MCF 10A (cell line): ENCODE measurements at regions of chr6 and their contacts with region 1.

Region 1: DNA sequence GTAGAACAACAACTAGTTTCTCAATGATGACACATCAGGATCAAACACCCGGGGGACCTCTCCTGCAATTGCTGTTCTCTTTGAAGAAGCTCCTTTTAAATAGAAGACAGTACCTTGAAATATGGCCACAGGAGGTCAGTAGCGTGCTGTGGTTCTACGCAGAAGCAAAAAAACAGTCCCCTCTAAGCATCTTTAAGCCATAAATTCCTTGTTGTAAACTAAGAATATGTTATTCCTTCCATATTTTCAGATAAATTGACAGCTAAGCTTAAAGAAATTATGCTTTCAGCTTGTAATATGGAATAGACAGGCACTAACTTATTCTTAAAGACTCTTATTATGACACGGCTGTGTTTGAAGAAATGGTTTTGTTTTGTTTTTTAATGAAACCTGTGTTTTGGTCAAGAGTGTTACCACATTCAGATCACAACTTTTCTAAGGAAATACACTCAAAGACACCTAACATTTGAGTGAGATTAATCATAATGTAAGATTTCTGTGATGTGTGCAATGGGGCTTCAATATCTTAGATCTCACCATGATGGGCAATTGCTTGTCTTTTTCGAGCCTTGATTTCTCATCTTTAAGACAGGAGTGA is 49.7 kb upstream of the IL20RA start:
- DNase-seq: peak; percentile 81
- H3K4me3 Mint-ChIP-seq: no peak overlapping the region
- H3K27ac Mint-ChIP-seq: no peak overlapping the region
- H3K4me1 Mint-ChIP-seq: peaks cover 9% of the 10 kb centered on the region
- H3K27me3 Mint-ChIP-seq: no peaks in the 10 kb centered on the region
- CTCF ChIP-seq: peak; percentile 65

Region 2: GRCh38 chr6:137051790-137052472 is 42.6 kb before region 1 on chr6:
- CTCF ChIA-PET with region 1: no interaction called
- POLR2A ChIA-PET with region 1: no interaction called
- intact Hi-C with region 1: no loop called
- DNase-seq: no peak
- H3K4me3 Mint-ChIP-seq: no peak overlapping the region
- H3K27ac Mint-ChIP-seq: no peak overlapping the region
- H3K4me1 Mint-ChIP-seq: no peaks in the 10 kb centered on the region
- H3K27me3 Mint-ChIP-seq: no peaks in the 10 kb centered on the region
- CTCF ChIP-seq: no peak

Region 3: DNA sequence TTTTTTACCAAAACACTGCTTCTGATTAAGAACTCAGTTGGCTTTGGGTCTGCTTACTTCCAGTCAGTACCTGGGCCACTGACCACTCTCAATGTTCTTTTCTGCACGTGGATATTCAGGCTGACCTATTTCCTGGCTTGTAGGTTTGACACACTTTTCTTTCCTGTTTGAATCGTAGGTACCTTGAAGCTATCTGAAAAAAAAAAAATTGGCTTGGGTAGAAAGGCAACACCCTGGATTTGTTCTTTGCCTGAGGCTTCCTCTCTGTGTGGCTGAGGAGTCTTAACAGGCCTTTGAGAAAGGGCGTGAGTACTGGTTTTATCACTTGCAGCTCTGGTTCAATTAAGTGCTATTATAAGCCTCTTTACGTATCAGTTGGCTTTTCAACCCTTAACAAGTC is 10.9 kb after region 1 on chr6:
- CTCF ChIA-PET with region 1: interaction called, 12 read pairs
- POLR2A ChIA-PET with region 1: interaction called, 27 read pairs
- intact Hi-C with region 1: no loop called
- DNase-seq: peak; percentile 81
- H3K4me3 Mint-ChIP-seq: no peak overlapping the region
- H3K27ac Mint-ChIP-seq: peak overlapping the region; percentile 85
- H3K4me1 Mint-ChIP-seq: peaks cover 25% of the 10 kb centered on the region
- H3K27me3 Mint-ChIP-seq: no peaks in the 10 kb centered on the region
- CTCF ChIP-seq: no peak

Region 4: GRCh38 chr6:137136065-137136464 is 41.6 kb after region 1 on chr6:
- CTCF ChIA-PET with region 1: interaction called, 5 read pairs
- POLR2A ChIA-PET with region 1: interaction called, 3 read pairs
- intact Hi-C with region 1: loop called (anchors 2 kb)
- DNase-seq: peak; percentile 43
- H3K4me3 Mint-ChIP-seq: no peak overlapping the region
- H3K27ac Mint-ChIP-seq: no peak overlapping the region
- H3K4me1 Mint-ChIP-seq: peaks cover 10% of the 10 kb centered on the region
- H3K27me3 Mint-ChIP-seq: no peaks in the 10 kb centered on the region
- CTCF ChIP-seq: peak; percentile 54

Region 5: DNA sequence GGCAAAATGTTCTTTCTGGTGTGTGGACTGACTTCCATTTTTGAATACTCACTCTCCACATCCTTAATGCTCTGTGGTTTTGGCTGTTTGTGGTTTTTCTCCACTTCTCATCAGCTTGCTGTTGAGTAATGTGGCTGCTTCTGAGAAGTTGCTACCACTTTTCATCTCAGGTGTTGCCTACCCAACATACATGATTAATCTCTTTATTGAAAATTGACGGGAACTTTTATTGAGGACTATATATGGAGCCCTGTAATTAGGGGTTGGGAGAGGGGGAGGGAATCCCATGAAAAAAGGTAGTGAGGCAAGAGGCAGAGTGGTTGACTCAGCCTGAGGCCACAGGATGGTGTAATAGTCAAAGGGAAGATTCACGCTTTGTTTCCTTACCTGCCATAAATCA is 61.3 kb after region 1 on chr6:
- CTCF ChIA-PET with region 1: interaction called, 27 read pairs
- POLR2A ChIA-PET with region 1: interaction called, 40 read pairs
- intact Hi-C with region 1: no loop called
- DNase-seq: peak; percentile 93
- H3K4me3 Mint-ChIP-seq: peak overlapping the region; percentile 59
- H3K27ac Mint-ChIP-seq: peak overlapping the region; percentile 85
- H3K4me1 Mint-ChIP-seq: peaks cover 53% of the 10 kb centered on the region
- H3K27me3 Mint-ChIP-seq: no peaks in the 10 kb centered on the region
- CTCF ChIP-seq: no peak

Region 6: DNA sequence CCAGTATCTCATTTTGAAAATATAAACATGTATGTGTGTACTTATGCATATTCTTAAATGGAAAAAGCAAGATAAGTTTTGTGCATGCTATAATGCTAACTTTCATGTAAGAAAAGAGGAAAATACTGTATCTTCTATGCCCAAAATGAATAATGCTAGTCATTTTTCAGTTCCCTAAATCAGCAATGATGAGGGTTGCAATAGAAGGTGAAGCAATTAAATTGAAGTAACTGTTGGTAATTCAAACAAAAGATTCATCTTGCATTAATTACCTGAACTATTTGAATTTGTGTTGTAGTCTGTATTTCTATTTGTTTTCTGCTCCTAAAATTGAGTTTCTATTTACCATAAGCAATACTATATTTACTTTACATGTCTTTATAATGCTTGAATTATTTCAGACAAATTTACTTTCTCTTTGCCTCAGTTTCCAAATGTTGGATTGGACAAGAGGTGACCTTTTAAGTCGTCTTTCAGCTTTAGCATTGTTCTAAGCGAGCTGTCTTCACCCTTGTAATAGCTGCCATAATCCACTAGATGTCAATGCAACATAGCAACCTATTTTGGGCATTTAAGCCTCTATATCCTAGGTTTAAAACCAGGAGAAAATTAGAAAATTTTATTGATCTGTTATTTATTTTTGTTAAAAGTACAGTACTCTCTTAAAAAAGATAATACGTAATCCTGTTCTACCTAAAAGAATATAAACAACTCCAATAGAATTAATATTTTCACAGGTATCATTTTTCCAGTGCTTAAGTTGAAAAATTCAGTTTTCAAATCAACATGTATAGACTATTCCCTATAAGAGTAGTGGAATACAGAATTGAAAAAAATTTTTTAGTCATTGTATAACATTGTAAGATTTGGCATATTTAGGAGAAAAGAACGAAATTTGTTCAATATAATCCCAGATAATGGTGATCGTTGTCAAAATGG is 177.0 kb after region 1 on chr6:
- CTCF ChIA-PET with region 1: interaction called, 11 read pairs
- POLR2A ChIA-PET with region 1: no interaction called
- intact Hi-C with region 1: loop called (anchors 5 kb)
- DNase-seq: peak; percentile 71
- H3K4me3 Mint-ChIP-seq: no peak overlapping the region
- H3K27ac Mint-ChIP-seq: no peak overlapping the region
- H3K4me1 Mint-ChIP-seq: peaks cover 19% of the 10 kb centered on the region
- H3K27me3 Mint-ChIP-seq: no peaks in the 10 kb centered on the region
- CTCF ChIP-seq: peak; percentile 81